Caco-2 (cell line): ENCODE measurements at regions of chr2 and their contacts with region 1.

Region 1: DNA sequence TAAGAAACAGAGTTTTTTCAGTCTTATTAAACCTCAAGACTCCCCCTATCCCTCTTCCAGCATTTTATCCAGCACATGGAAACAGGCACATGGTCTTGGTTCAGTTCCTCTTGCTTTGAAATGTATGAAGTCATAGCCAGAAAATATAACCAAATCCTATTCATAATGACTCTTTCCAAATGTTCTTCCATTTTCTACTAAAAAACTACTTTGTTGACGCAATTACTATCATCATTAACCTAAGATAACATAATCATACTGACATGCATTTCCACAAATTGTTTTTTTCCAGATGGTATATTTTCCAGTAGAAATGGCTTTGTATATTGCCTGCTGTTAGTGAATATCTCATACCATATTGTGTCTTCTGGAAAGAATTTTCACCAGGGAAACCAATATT is 261.3 kb downstream of the PID1 start:
- DNase-seq: no peak
- H3K4me3 ChIP-seq: no peak overlapping the region
- H3K4me3 Mint-ChIP-seq: no peak overlapping the region
- H3K27ac Mint-ChIP-seq: no peak overlapping the region
- H3K4me1 ChIP-seq: no peaks in the 10 kb centered on the region
- H3K4me1 Mint-ChIP-seq: no peaks in the 10 kb centered on the region
- H3K27me3 ChIP-seq: no peaks in the 10 kb centered on the region
- H3K27me3 Mint-ChIP-seq: no peaks in the 10 kb centered on the region
- CTCF ChIP-seq: no peak

Region 2: GRCh38 chr2:228917220-228917619 is 92.6 kb before region 1 on chr2:
- CTCF ChIA-PET with region 1: no interaction called
- POLR2A ChIA-PET with region 1: no interaction called
- intact Hi-C with region 1: no loop called
- DNase-seq: no peak
- H3K4me3 ChIP-seq: no peak overlapping the region
- H3K4me3 Mint-ChIP-seq: no peak overlapping the region
- H3K27ac Mint-ChIP-seq: no peak overlapping the region
- H3K4me1 ChIP-seq: no peaks in the 10 kb centered on the region
- H3K4me1 Mint-ChIP-seq: no peaks in the 10 kb centered on the region
- H3K27me3 ChIP-seq: no peaks in the 10 kb centered on the region
- H3K27me3 Mint-ChIP-seq: no peaks in the 10 kb centered on the region
- CTCF ChIP-seq: no peak

Region 3: GRCh38 chr2:228983700-228984099 is 26.1 kb before region 1 on chr2:
- CTCF ChIA-PET with region 1: no interaction called
- POLR2A ChIA-PET with region 1: no interaction called
- intact Hi-C with region 1: loop called (anchors 5 kb)
- DNase-seq: no peak
- H3K4me3 ChIP-seq: no peak overlapping the region
- H3K4me3 Mint-ChIP-seq: no peak overlapping the region
- H3K27ac Mint-ChIP-seq: no peak overlapping the region
- H3K4me1 ChIP-seq: no peaks in the 10 kb centered on the region
- H3K4me1 Mint-ChIP-seq: no peaks in the 10 kb centered on the region
- H3K27me3 ChIP-seq: no peaks in the 10 kb centered on the region
- H3K27me3 Mint-ChIP-seq: no peaks in the 10 kb centered on the region
- CTCF ChIP-seq: no peak